CD8-positive, alpha-beta memory T cell (primary cell): ENCODE measurements at regions of chr1 and their contacts with region 1.

Region 1: GRCh38 chr1:91165033-91165654 is 143.3 kb upstream of the ZNF644 start:
- DNase-seq: peak; percentile 33 to 68 (median 51)
- H3K4me3 ChIP-seq: no peak overlapping the region
- H3K4me3 Mint-ChIP-seq: no peak overlapping the region
- H3K27ac ChIP-seq: no peak overlapping the region
- H3K27ac Mint-ChIP-seq: peak overlapping the region in 2 of 8 donors; percentile 34 to 81
- H3K4me1 ChIP-seq: no peaks in the 10 kb centered on the region
- H3K4me1 Mint-ChIP-seq: peaks cover 3 to 12% (median 4%) of the 10 kb centered on the region in 3 donors
- H3K27me3 ChIP-seq: no peaks in the 10 kb centered on the region
- H3K27me3 Mint-ChIP-seq: peaks cover 0 to 1% of the 10 kb centered on the region in 2 donors

Region 2: DNA sequence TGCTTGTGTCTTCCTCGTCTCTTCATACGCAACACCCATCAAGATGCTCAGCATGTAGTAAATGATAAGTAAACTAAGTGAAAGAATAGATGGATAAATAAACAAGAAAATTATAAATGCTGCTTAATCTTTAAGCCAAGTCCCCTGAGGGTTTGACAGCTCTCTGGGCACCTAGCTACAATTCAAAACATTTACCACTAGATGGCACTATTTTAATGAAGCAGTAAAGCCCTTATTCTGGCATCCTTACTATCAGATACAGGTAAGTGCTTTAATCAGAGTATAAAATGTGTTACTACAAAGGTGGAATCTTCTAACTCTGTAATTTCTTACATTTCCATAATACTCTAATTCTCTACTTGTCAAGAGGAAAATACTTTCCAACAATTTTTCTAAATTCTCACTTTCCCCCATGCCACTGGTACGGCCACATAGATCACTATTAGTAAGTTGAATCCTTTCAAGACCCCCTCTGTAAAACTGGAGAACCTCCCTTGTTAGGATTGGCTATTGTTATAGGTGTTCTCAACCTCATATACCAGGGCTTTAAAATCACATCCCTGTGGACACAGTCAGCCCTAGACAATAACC is 585.8 kb before region 1 on chr1:
- CTCF ChIA-PET with region 1: interaction called, 20 read pairs
- POLR2A ChIA-PET with region 1: no interaction called
- DNase-seq: peak in 2 of 5 donors; percentile 19 to 37
- H3K4me3 ChIP-seq: no peak overlapping the region
- H3K4me3 Mint-ChIP-seq: no peak overlapping the region
- H3K27ac ChIP-seq: no peak overlapping the region
- H3K27ac Mint-ChIP-seq: no peak overlapping the region
- H3K4me1 ChIP-seq: no peaks in the 10 kb centered on the region
- H3K4me1 Mint-ChIP-seq: no peaks in the 10 kb centered on the region
- H3K27me3 ChIP-seq: peaks cover 6% of the 10 kb centered on the region
- H3K27me3 Mint-ChIP-seq: peaks cover 6 to 9% of the 10 kb centered on the region in 2 donors